HAP-1 (cell line): ENCODE measurements at regions of chr5 and their contacts with region 1.

Region 1: DNA sequence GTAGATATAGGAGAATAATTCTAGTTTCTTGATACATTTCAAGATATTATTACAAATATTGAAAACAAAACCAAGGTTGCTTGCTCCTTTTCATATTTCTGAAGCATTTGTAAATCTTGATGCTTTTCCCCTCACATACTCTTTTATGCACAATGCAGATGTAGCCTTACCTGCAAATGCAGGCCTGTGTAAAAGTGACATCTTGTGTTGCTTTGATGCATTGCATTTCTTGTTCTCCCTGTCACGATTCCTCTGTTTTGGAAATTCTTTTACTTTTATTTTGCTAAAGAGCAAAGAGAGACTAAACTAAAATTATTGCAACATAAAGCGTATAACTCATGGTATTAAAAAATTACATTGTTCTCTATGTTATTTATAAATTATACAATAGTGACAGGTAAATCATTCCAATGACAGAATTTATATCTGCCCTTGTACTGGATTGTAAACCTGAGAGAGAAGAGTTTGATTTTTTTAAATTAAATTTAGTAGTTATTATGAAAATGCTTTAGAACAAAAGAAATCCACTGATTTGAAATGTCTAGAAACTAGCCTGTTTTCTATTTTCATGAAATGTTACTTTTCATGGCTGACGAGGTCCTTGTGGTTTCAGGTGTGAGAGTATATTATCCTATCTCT is 970.0 kb downstream of the MAT2B start:
- DNase-seq: no peak
- H3K4me3 ChIP-seq: no peak overlapping the region
- H3K4me1 ChIP-seq: no peaks in the 10 kb centered on the region
- H3K27me3 ChIP-seq: no peaks in the 10 kb centered on the region

Region 2: DNA sequence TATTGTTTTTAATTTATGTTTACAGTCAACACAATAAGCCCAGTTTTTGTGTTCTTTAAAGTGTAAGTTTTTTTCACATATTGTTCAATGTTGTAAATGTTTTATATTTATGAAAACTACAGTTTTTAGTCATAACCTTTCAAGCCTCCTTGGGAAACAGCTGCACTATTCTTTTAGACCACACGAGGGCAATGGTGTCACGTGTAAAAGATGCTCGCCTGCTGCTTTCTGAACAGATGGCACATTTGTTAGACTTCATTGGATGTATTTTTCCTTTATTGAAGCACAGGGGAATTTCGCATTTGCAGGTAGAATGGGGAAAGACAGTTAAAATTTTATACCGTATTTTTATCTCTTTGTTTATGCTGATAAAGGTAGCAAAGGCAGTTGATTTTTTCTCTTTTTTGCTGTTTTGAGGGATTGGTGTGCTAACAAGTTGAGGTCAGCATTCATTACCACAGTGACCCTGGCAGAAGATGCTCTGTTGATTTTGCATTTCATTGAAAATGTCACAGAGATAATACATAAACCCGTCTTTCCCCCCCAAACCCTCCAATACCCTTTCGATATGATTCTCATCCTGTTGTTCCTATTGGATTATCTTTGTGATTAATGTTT is 911.0 kb before region 1 on chr5:
- in situ Hi-C with region 1: loop called (anchors 25 kb)
- DNase-seq: peak; percentile 54 to 74
- H3K4me3 ChIP-seq: no peak overlapping the region
- H3K4me1 ChIP-seq: peaks cover 6% of the 10 kb centered on the region
- H3K27me3 ChIP-seq: peaks cover 72% of the 10 kb centered on the region

Region 3: GRCh38 chr5:164048359-164048926 is 427.0 kb before region 1 on chr5:
- in situ Hi-C with region 1: loop called (anchors 25 kb)
- DNase-seq: no peak
- H3K4me3 ChIP-seq: no peak overlapping the region
- H3K4me1 ChIP-seq: no peaks in the 10 kb centered on the region
- H3K27me3 ChIP-seq: no peaks in the 10 kb centered on the region

Region 4: GRCh38 chr5:164370841-164371240 is 104.6 kb before region 1 on chr5:
- in situ Hi-C with region 1: no loop called
- DNase-seq: no peak
- H3K4me3 ChIP-seq: no peak overlapping the region
- H3K4me1 ChIP-seq: no peaks in the 10 kb centered on the region
- H3K27me3 ChIP-seq: no peaks in the 10 kb centered on the region